T-cell (primary cell): ENCODE measurements at regions of chr18 and their contacts with region 1.

Region 1: DNA sequence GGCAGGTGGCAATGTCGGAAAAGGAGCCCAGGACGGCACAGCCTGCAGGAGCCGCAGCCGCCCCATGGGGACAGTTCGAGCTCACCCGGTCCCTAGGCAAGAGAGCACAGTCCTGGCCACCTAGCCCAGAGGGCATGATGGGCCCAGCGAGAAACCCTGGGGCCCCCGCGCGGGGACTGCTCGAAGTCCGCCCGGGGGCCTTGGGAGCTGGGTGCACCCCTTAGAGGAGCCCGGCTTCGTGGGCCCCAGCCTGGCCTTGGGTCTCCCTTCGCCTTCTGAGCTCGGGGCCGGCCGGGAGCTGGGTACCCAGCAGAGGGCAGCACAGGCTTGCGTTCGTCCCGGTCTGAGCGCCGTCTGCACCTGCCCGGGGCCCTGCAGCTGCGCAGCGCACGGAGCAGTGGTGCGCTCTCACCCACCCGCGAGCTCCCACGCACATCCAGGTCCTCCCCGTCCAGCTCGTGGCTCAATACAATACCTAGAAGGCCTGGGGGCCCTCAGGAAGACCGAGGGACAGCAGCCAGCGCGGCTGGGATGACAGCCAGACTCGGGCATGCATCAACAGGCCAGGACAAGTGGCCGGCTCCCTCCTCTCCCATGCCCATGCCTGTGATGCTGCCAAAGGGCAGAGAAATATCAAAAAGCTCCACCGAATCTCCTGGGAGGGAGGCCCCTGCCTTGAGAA is 96.2 kb upstream of the ZNF532 start:
- DNase-seq: peak; percentile 19 to 75 (median 56)
- ATAC-seq: peak; percentile 86 to 90 (median 89)
- H3K4me3 ChIP-seq: peak overlapping the region; percentile 21 to 27
- H3K4me3 Mint-ChIP-seq: peak overlapping the region; percentile 41 to 70 (median 43)
- H3K27ac ChIP-seq: no peak overlapping the region
- H3K27ac Mint-ChIP-seq: no peak overlapping the region
- H3K4me1 ChIP-seq: peaks cover 0 to 16% of the 10 kb centered on the region in 2 experiments
- H3K4me1 Mint-ChIP-seq: peaks cover 12 to 19% (median 13%) of the 10 kb centered on the region in 3 donors
- H3K27me3 ChIP-seq: peaks cover 0 to 47% of the 10 kb centered on the region in 2 experiments
- H3K27me3 Mint-ChIP-seq: peaks cover 47 to 48% of the 10 kb centered on the region in 2 donors

Region 2: GRCh38 chr18:58202406-58202730 is 566.1 kb before region 1 on chr18:
- CTCF ChIA-PET with region 1: no interaction called
- POLR2A ChIA-PET with region 1: no interaction called
- DNase-seq: no peak
- ATAC-seq: no peak
- H3K4me3 ChIP-seq: no peak overlapping the region
- H3K4me3 Mint-ChIP-seq: no peak overlapping the region
- H3K27ac ChIP-seq: no peak overlapping the region
- H3K27ac Mint-ChIP-seq: no peak overlapping the region
- H3K4me1 ChIP-seq: no peaks in the 10 kb centered on the region
- H3K4me1 Mint-ChIP-seq: no peaks in the 10 kb centered on the region
- H3K27me3 ChIP-seq: peaks cover 0 to 5% of the 10 kb centered on the region in 2 experiments
- H3K27me3 Mint-ChIP-seq: peaks cover 3% of the 10 kb centered on the region in 2 donors

Region 3: GRCh38 chr18:58520969-58521368 is 247.5 kb before region 1 on chr18:
- CTCF ChIA-PET with region 1: interaction called, 19 to 177 read pairs
- POLR2A ChIA-PET with region 1: no interaction called
- DNase-seq: no peak
- ATAC-seq: no peak
- H3K4me3 ChIP-seq: no peak overlapping the region
- H3K4me3 Mint-ChIP-seq: no peak overlapping the region
- H3K27ac ChIP-seq: no peak overlapping the region
- H3K27ac Mint-ChIP-seq: no peak overlapping the region
- H3K4me1 ChIP-seq: no peaks in the 10 kb centered on the region
- H3K4me1 Mint-ChIP-seq: no peaks in the 10 kb centered on the region
- H3K27me3 ChIP-seq: peaks cover 0 to 5% of the 10 kb centered on the region in 2 experiments
- H3K27me3 Mint-ChIP-seq: peaks cover 10 to 16% of the 10 kb centered on the region in 2 donors

Region 4: GRCh38 chr18:58535340-58536201 is 232.9 kb before region 1 on chr18:
- CTCF ChIA-PET with region 1: interaction called, 72 to 177 read pairs
- POLR2A ChIA-PET with region 1: no interaction called
- DNase-seq: peak in 3 of 35 experiments; percentile 2 to 22 (median 17)
- ATAC-seq: peak in 2 of 4 experiments; percentile 23 to 34
- H3K4me3 ChIP-seq: no peak overlapping the region
- H3K4me3 Mint-ChIP-seq: no peak overlapping the region
- H3K27ac ChIP-seq: no peak overlapping the region
- H3K27ac Mint-ChIP-seq: no peak overlapping the region
- H3K4me1 ChIP-seq: no peaks in the 10 kb centered on the region
- H3K4me1 Mint-ChIP-seq: peaks cover 12 to 33% (median 20%) of the 10 kb centered on the region in 3 donors
- H3K27me3 ChIP-seq: peaks cover 0 to 9% of the 10 kb centered on the region in 2 experiments
- H3K27me3 Mint-ChIP-seq: no peaks in the 10 kb centered on the region

Region 5: DNA sequence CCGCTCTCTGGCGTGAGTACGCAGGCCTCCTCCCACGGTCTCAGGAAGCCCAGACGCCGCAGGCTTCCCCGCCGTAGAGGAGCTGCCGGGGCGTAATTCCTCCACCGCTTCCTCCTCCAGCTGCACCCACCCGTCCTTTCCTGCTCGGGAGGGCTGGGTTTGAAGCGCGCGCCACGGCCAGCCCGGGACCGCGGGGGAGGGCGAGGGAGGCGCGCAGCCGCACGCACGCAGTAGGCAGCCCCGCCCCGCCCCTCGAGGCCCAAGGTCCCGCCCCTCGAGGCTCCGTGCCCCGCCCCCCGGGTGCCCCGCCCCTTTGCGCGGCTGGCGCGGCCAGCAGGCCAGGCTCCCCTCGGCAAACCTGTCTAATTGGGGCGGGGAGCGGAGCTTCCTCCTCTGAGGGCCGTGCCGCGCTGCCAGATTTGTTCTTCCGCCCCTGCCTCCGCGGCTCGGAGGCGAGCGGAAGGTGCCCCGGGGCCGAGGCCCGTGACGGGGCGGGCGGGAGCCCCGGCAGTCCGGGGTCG is 97.3 kb before region 1 on chr18 and contains the start of gene MALT1:
- CTCF ChIA-PET with region 1: interaction called, 8 to 11 read pairs
- POLR2A ChIA-PET with region 1: no interaction called
- DNase-seq: peak; percentile 84 to 98 (median 94)
- ATAC-seq: peak; percentile 82 to 90 (median 87)
- H3K4me3 ChIP-seq: peak within 1 kb of the TSS; percentile 74 to 90
- H3K4me3 Mint-ChIP-seq: peak within 1 kb of the TSS; percentile 93 to 95 (median 93)
- H3K27ac ChIP-seq: peak within 1 kb of the TSS; percentile 57
- H3K27ac Mint-ChIP-seq: peak within 1 kb of the TSS; percentile 94 to 95
- H3K4me1 ChIP-seq: peaks cover 29 to 42% of the 10 kb centered on the region in 2 experiments
- H3K4me1 Mint-ChIP-seq: peaks cover 51 to 61% (median 55%) of the 10 kb centered on the region in 3 donors
- H3K27me3 ChIP-seq: no peaks in the 10 kb centered on the region
- H3K27me3 Mint-ChIP-seq: no peaks in the 10 kb centered on the region
- total RNA-seq, gene MALT1: 54.5 to 83.2 (median 69.5) TPM

Region 6: GRCh38 chr18:58788971-58789875 is 20.8 kb after region 1 on chr18:
- CTCF ChIA-PET with region 1: no interaction called
- POLR2A ChIA-PET with region 1: no interaction called
- DNase-seq: no peak
- ATAC-seq: no peak
- H3K4me3 ChIP-seq: no peak overlapping the region
- H3K4me3 Mint-ChIP-seq: no peak overlapping the region
- H3K27ac ChIP-seq: no peak overlapping the region
- H3K27ac Mint-ChIP-seq: no peak overlapping the region
- H3K4me1 ChIP-seq: no peaks in the 10 kb centered on the region
- H3K4me1 Mint-ChIP-seq: peaks cover 0 to 4% (median 0%) of the 10 kb centered on the region in 3 donors
- H3K27me3 ChIP-seq: peaks cover 0 to 30% of the 10 kb centered on the region in 2 experiments
- H3K27me3 Mint-ChIP-seq: peaks cover 31 to 34% of the 10 kb centered on the region in 2 donors

Region 7: DNA sequence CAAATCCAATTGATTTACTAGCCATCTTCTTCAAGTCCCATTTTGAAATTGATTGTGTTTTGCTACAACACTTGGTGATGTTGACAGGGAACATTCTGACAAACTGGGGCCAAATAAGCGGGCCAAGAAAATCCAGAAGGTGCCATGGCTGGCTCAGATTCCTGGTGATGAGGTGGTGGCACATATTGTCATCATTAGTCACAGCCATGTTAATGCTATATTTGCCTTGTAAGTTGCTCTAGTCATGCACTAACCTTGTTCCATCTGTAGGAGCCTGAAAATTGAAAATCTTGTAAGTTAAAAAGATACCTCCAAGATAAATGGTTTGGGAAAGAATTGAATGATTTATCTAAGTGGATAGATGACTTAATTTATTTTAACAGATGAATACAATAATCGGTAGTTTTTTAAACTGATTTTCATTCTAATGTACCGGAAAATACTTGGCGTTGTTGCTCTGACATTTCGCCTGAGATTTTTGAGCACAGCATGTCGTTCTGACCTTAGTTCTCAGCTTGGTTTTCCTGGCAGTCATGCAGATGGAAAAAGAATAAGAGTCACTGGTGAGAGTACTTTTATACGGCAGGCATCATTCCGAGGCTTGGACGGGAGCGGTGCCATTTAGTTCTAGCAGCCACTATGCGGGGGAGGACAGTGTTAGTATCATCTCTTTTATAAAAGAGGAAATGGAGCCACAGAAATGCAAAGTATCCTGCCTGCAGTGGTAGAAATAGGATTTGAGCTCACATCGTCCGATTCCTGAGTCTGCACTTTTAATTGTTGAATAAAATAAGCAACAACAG is 230.2 kb after region 1 on chr18:
- CTCF ChIA-PET with region 1: no interaction called
- POLR2A ChIA-PET with region 1: no interaction called
- DNase-seq: no peak
- ATAC-seq: no peak
- H3K4me3 ChIP-seq: no peak overlapping the region
- H3K4me3 Mint-ChIP-seq: no peak overlapping the region
- H3K27ac ChIP-seq: no peak overlapping the region
- H3K27ac Mint-ChIP-seq: no peak overlapping the region
- H3K4me1 ChIP-seq: no peaks in the 10 kb centered on the region
- H3K4me1 Mint-ChIP-seq: no peaks in the 10 kb centered on the region
- H3K27me3 ChIP-seq: peaks cover 0 to 3% of the 10 kb centered on the region in 2 experiments
- H3K27me3 Mint-ChIP-seq: peaks cover 9 to 22% of the 10 kb centered on the region in 2 donors

Region 8: DNA sequence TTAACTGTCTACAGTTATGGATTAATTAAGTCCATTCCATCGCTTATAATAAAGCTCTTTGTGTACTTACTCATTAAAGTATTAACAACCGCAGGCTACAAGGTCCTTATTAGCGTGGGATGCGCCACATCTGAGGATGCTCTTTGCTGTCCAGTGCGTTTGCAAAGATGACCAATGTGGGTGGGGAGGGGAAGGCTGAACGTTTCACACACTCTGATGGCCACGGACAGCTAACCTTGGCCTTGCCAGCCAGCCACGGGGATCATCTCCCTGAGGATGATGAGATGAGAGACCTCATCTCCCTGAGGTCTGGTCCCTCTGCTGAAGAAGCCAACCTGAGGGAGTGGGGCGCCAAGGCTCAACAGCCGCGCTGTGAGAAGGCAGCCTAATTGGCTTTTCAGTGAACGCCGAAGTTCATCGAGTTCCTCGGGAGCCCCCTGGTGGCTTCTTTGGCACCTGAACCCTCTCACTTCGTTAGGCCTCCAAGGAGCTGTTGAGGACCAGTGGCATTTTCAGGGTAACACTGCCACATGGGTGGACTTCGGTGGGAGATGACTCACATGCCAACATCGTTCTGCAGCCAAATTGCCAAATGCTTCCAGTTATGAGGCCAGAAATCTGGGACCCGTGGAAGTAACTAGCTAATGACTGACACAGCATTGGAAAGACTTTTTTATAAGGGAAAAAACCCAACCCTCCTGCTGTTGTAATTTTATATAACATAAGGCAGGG is 301.9 kb after region 1 on chr18:
- CTCF ChIA-PET with region 1: interaction called, 3 to 16 read pairs
- POLR2A ChIA-PET with region 1: no interaction called
- DNase-seq: peak; percentile 29 to 79 (median 66)
- ATAC-seq: peak; percentile 66 to 77 (median 75)
- H3K4me3 ChIP-seq: no peak overlapping the region
- H3K4me3 Mint-ChIP-seq: no peak overlapping the region
- H3K27ac ChIP-seq: no peak overlapping the region
- H3K27ac Mint-ChIP-seq: no peak overlapping the region
- H3K4me1 ChIP-seq: peaks cover 0 to 3% of the 10 kb centered on the region in 2 experiments
- H3K4me1 Mint-ChIP-seq: no peaks in the 10 kb centered on the region
- H3K27me3 ChIP-seq: peaks cover 0 to 6% of the 10 kb centered on the region in 2 experiments
- H3K27me3 Mint-ChIP-seq: peaks cover 0 to 20% of the 10 kb centered on the region in 2 donors

Region 9: DNA sequence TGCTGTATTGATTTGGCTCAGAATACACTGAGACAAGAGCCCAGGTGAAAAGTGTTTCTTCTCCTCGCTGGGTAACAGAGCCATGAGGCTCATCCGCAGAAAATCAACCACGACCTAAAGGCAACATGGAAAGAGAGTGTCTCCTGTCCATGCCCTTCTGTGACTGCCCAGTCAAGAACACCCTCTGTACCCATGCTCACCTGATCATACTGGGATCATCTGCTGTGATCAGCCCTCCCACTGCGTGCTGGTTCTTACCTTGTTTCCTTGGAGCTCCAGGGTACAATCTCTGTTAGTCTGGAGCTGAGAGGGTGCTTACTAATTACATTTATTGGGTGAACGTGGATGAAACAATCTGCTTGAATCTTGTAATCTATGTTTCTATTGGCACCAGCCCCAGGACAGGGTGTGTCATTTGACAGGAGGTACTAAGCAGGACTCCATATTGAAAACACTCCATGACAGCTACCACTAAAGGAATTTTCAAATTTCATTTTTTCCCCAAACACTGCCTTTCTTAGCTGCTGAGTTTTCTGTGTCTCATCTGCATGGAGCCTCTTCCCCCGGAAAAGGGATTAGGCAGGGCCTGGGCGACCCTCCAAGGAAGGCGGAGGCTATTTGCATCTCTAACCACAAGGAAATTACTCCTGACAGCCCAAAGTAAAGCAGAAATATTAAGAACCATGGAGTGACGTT is 411.9 kb after region 1 on chr18:
- CTCF ChIA-PET with region 1: no interaction called
- POLR2A ChIA-PET with region 1: no interaction called
- DNase-seq: no peak
- ATAC-seq: no peak
- H3K4me3 ChIP-seq: no peak overlapping the region
- H3K4me3 Mint-ChIP-seq: no peak overlapping the region
- H3K27ac ChIP-seq: no peak overlapping the region
- H3K27ac Mint-ChIP-seq: no peak overlapping the region
- H3K4me1 ChIP-seq: no peaks in the 10 kb centered on the region
- H3K4me1 Mint-ChIP-seq: no peaks in the 10 kb centered on the region
- H3K27me3 ChIP-seq: peaks cover 0 to 21% of the 10 kb centered on the region in 2 experiments
- H3K27me3 Mint-ChIP-seq: peaks cover 12 to 30% of the 10 kb centered on the region in 2 donors